Dorsolateral prefrontal cortex (tissue), 120 donors: ENCODE measurements at regions of chr1 and their contacts with region 1.

Region 1: GRCh38 chr1:35769759-35770446 is at the start of gene CLSPN:
- DNase-seq: peak; percentile 78 to 97 (median 94)
- H3K4me3 ChIP-seq: peak within 1 kb of the TSS; percentile 63 to 96 (median 81)
- H3K27ac ChIP-seq: peak within 1 kb of the TSS in 45 of 59 donors; percentile 3 to 88 (median 63)
- H3K27me3 ChIP-seq: no peaks in the 10 kb centered on the region
- CTCF ChIP-seq: peak in 14 of 56 donors; percentile 3 to 33 (median 16)
- total RNA-seq, gene CLSPN: 0.48 to 6.7 (median 2.4) TPM

Region 2: DNA sequence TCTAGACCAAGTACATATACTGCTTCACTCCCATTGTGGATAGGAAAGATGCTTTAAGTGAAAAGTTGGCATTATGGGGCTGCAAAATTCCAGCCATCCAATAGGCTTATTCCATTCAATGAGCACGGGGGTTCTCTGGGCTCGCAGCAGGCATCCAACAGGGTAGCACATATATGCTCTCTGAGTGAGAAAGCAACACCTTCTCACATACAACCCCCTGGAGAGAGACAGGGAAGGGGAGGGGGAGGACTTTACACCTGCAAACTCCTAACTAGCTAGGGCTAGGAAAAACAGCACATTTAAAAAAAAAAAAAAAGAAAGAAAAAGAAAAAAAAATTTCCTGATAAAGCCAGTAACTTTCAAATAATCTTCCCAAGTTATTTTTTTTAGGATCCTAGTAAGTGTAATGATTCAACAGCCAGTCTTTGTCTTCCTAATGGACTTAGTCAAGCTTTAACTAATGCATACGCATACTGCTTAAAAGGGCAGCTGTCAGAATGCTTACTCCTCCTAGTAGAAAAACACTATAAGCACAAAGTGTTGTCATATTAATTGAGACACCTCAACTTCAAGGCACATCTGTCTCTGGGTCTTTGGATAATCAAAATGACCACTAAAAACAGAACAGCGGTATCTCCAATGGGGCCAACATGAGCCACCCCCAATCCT is 147.3 kb before region 1 on chr1:
- intact Hi-C with region 1: no loop called
- DNase-seq: no peak
- H3K4me3 ChIP-seq: no peak overlapping the region
- H3K27ac ChIP-seq: no peak overlapping the region
- H3K27me3 ChIP-seq: no peaks in the 10 kb centered on the region
- CTCF ChIP-seq: no peak

Region 3: GRCh38 chr1:35715568-35716002 is 54.3 kb before region 1 on chr1:
- intact Hi-C with region 1: loop called in 1 of 2 experiments (anchors 10 kb)
- DNase-seq: peak; percentile 69 to 86 (median 78)
- H3K4me3 ChIP-seq: peak overlapping the region in 57 of 59 donors; percentile 5 to 99 (median 90)
- H3K27ac ChIP-seq: peak overlapping the region in 53 of 59 donors; percentile 18 to 98 (median 87)
- H3K27me3 ChIP-seq: no peaks in the 10 kb centered on the region
- CTCF ChIP-seq: peak; percentile 71 to 95 (median 86)

Region 4: DNA sequence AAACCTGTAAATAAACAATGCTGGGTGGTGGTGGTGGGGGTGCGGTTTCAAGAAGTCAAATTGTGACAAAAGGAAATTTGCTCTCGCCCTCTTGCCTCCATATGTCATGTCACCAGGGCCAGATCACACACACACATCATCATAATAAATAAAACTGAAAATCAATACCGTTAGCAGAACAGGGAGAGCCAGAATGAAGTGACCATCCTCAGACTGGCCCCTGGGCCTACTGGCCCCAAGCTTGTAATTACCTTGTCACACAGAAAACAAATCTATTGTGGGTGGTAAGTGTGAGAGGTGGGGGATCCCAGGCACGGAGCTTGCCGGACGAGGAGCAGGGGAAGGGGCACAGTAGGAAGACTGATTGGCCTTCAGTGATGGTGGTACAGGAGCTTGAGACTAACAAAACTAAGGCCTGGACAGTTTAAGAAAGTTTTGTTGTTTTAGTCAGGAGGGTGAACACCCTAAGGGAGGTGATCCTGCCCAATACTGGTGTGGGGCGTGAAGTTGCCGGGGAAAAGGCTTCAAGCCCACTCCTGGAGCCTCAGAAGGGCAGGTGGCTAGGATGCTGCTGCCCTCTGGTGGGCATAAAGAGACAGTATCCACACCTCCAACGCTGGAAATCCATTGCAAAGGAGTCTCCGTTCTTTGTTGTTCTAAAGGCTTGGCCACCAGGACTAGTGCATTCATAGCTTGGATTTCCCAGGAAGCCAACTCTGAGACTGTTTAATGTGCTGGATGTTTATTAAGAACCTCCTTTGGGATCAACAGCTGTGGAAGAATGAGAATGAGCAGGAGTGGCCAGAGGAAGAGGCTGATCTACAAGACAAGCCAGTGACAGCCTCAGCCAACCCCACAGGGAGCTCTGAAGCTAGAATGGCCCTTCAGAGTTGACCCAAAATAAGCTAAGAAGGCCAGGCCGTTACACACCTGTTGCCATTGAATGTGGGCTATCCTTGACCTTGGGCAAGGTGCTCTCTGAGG is 43.2 kb before region 1 on chr1:
- intact Hi-C with region 1: loop called in 1 of 2 experiments (anchors 5 kb)
- DNase-seq: peak in 9 of 10 donors; percentile 41 to 74 (median 64)
- H3K4me3 ChIP-seq: peak overlapping the region in 2 of 59 donors; percentile 1 to 15
- H3K27ac ChIP-seq: peak overlapping the region in 13 of 59 donors; percentile 3 to 75 (median 55)
- H3K27me3 ChIP-seq: no peaks in the 10 kb centered on the region
- CTCF ChIP-seq: peak; percentile 43 to 95 (median 90)